HepG2 (cell line): ENCODE measurements at regions of chr10 and their contacts with region 1.

Region 1: GRCh38 chr10:29392376-29393021 is 103.6 kb downstream of the LYZL1 start:
- DNase-seq: peak; percentile 54
- ATAC-seq: peak; percentile 73
- H3K4me3 ChIP-seq: no peak overlapping the region
- H3K27ac ChIP-seq: no peak overlapping the region
- H3K4me1 ChIP-seq: peaks cover 36% of the 10 kb centered on the region
- H3K27me3 ChIP-seq: 0 out of 5 replicates have a peak, but pooled peaks cover 0 to 1% of the 10 kb centered on the region in 2 experiments
- CTCF ChIP-seq: peak; percentile 75
- EP300 ChIP-seq: no peak
- POLR2A ChIP-seq: no peak
- RAD21 ChIP-seq: 0 out of 2 replicates have a peak, but pooled peaks have one; percentile 17

Region 2: DNA sequence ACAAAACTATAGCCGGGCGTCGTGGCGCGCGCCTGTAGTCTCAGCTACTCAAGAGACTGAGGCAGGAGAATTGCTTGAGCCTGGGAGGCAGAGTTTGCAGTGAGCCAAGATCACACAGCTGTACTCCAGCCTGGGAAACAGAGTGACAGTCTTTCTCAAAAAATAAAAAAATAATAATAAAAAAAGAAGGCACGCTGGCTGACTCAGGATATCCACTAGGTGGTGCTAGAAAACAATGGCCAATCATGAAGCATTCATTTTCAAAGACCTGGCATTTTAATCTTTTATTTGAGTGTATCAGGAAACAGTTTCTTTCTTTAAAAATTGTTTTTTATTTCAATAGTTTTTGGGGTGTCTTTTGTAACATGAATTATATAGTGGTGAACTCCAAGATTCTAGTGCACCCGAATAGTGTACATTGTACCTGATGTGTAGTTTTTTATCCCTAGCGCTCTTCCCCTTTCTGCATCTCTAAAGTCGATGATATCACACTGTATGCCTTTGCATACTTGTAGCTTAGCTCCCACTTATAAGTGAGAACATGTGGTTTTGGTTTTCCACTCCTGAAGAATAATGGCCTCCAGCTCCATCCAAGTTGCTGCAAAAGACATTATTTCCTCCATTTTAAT is 15.1 kb before region 1 on chr10:
- CTCF ChIA-PET with region 1: no interaction called
- POLR2A ChIA-PET with region 1: no interaction called
- in situ Hi-C with region 1: no loop called
- intact Hi-C with region 1: loop called (anchors 1 kb)
- DNase-seq: no peak
- ATAC-seq: no peak
- H3K4me3 ChIP-seq: no peak overlapping the region
- H3K27ac ChIP-seq: no peak overlapping the region
- H3K4me1 ChIP-seq: peaks cover 36% of the 10 kb centered on the region
- H3K27me3 ChIP-seq: peaks cover 0 to 6% of the 10 kb centered on the region in 2 experiments; a peak in 2 of 5 replicates
- CTCF ChIP-seq: peak; percentile 40; the same call in 1 of the 2 replicates
- EP300 ChIP-seq: no peak
- POLR2A ChIP-seq: no peak
- RAD21 ChIP-seq: no peak

Region 3: DNA sequence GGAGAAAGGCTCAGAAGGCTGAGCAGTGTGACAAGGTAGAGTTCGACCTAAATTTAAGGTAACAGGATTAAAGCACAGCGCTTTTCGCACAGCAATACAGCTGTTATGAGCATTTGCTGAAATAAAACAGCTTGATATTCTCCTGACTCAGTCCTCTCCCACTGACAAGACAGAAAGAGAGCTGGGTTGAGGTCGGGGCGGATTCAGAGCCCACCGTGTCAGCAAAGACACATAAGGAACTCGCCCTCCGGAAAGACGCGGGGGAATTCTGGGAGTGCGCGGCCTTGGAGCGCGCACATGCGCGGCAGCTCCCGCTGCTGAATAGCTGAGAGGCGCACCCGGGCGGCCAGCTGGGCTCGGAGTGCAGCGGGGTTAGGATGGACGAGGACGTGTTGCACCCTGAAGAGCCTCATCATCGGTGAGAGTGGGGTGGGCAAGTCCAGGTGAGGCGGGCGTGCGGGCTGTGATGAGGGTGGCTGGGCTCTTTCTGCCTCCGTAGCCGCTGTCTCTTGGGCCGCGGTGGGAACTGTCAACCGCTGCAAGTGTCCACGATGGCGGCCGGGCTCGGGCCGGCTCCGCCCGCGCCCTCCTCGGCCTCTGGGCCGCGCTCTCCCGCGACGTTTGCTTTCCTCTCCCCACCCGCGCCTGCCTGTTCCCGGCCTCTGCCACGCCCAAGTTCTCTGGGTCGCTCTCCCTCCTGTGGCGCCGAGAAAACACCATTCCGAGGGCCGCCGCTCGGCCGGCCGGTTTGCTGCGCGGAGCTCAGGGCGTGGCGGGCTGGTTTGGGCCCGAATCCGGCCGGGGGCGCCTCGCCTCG is 16.9 kb after region 1 on chr10:
- CTCF ChIA-PET with region 1: no interaction called
- POLR2A ChIA-PET with region 1: interaction called, 10 read pairs
- in situ Hi-C with region 1: no loop called
- intact Hi-C with region 1: no loop called
- DNase-seq: peak; percentile 47
- ATAC-seq: peak; percentile 91
- H3K4me3 ChIP-seq: peak overlapping the region; percentile 83 to 95 (median 85)
- H3K27ac ChIP-seq: peak overlapping the region; percentile 79
- H3K4me1 ChIP-seq: peaks cover 41% of the 10 kb centered on the region
- H3K27me3 ChIP-seq: no peaks in the 10 kb centered on the region
- CTCF ChIP-seq: peak; percentile 47
- EP300 ChIP-seq: no peak
- POLR2A ChIP-seq: peak; percentile 69 to 89
- RAD21 ChIP-seq: peak; percentile 38; the same call in 1 of the 2 replicates

Region 4: GRCh38 chr10:29443745-29444523 is 51.4 kb after region 1 on chr10:
- CTCF ChIA-PET with region 1: interaction called, 3 read pairs
- POLR2A ChIA-PET with region 1: no interaction called
- in situ Hi-C with region 1: loop called (anchors 5 kb)
- intact Hi-C with region 1: loop called (anchors 1 kb)
- DNase-seq: peak; percentile 50
- ATAC-seq: peak; percentile 77
- H3K4me3 ChIP-seq: no peak overlapping the region
- H3K27ac ChIP-seq: peak overlapping the region; percentile 58
- H3K4me1 ChIP-seq: peaks cover 31% of the 10 kb centered on the region
- H3K27me3 ChIP-seq: no peaks in the 10 kb centered on the region
- CTCF ChIP-seq: no peak
- EP300 ChIP-seq: no peak
- POLR2A ChIP-seq: no peak
- RAD21 ChIP-seq: no peak